ENCODE measurements at regions of chr1 and their contacts with region 1.

Region 1: DNA sequence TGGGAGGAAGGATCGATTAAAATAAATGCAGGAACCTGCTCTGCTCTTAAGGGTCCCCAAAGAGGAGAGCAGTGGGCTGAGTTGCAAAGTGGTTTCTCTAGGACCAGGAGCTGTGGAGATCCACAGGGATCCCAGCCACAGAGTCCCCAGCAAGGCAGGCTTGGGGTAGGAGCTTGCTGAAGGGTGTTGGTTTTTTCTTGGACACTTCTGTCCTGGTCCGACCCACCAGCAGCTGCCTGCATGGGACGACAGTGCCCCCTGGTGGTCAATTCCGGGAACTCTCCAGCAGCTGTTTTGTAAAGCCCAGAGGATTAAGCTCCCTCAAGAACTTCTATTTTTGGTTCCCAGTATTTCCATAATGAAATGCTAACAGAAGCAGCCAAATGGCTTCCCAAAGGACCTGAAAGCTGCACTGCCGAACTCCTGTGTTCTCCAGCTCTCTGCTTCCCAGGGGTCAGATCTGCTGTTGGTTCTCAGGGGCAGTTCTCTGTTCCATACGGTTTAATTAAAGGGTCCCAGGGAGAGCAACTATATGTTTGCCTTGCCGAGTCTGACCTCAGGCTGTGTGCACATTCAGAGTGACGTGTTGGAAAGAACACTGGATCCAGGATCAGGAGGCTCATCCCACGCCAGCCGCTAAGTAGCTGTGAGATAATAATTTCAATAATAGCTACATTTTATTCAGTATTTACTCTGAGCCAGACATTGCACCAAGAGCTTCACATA is 23.2 kb downstream of the NENF start:
- DNase-seq: no peak
- ATAC-seq: peak; percentile 91
- H3K4me3 ChIP-seq: no peak overlapping the region
- H3K27ac ChIP-seq: no peak overlapping the region
- H3K4me1 ChIP-seq: no peaks in the 10 kb centered on the region
- H3K27me3 ChIP-seq: no peaks in the 10 kb centered on the region; a peak in 1 of 4 replicates
- CTCF ChIP-seq: peak; percentile 95 to 99 (median 96)
- EP300 ChIP-seq: no peak
- POLR2A ChIP-seq: no peak
- RAD21 ChIP-seq: peak; percentile 100

Region 2: GRCh38 chr1:211698161-211699026 is 757.6 kb before region 1 on chr1:
- CTCF ChIA-PET with region 1: interaction called, 26 read pairs
- POLR2A ChIA-PET with region 1: no interaction called
- RAD21 ChIA-PET with region 1: interaction called, 34 read pairs
- SMC1A ChIA-PET with region 1: interaction called, 5 read pairs
- in situ Hi-C with region 1: no loop called
- intact Hi-C with region 1: no loop called
- DNase-seq: peak; percentile 55
- ATAC-seq: peak; percentile 78
- H3K4me3 ChIP-seq: 0 out of 2 replicates have a peak overlapping the region, but pooled peaks have one; percentile 31
- H3K27ac ChIP-seq: no peak overlapping the region
- H3K4me1 ChIP-seq: peaks cover 40% of the 10 kb centered on the region
- H3K27me3 ChIP-seq: no peaks in the 10 kb centered on the region
- CTCF ChIP-seq: peak; percentile 98 to 99 (median 99); a peak in 5 of 6 replicates
- EP300 ChIP-seq: no peak
- POLR2A ChIP-seq: no peak
- RAD21 ChIP-seq: peak; percentile 93

Region 3: DNA sequence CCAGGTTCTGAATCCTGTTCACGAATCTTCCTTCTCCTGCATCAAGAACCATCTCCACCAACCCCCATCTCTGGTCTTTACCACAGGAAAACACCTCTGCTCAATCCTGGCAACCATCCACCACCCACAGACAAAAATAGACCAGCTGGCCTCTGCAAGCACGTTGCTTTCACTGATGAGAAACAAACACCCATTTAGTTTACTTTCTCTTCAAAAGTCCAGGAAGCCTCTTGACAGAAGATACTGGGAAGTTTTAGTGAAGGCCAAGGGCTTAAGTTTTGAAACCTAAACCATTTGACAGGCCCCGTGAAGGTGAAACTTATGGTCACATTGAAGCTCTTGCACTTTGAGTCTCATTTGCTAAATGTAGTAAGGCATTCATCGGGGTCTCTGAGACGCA is 293.3 kb before region 1 on chr1:
- CTCF ChIA-PET with region 1: interaction called, 3 read pairs
- POLR2A ChIA-PET with region 1: no interaction called
- RAD21 ChIA-PET with region 1: interaction called, 10 read pairs
- SMC1A ChIA-PET with region 1: interaction called, 6 read pairs
- in situ Hi-C with region 1: no loop called
- intact Hi-C with region 1: no loop called
- DNase-seq: peak; percentile 79
- ATAC-seq: peak; percentile 59
- H3K4me3 ChIP-seq: no peak overlapping the region
- H3K27ac ChIP-seq: peak overlapping the region; percentile 45
- H3K4me1 ChIP-seq: peaks cover 47% of the 10 kb centered on the region
- H3K27me3 ChIP-seq: no peaks in the 10 kb centered on the region
- CTCF ChIP-seq: no peak
- EP300 ChIP-seq: peak in 1 of 2 experiments; percentile 70; a peak in 2 of 4 replicates
- POLR2A ChIP-seq: no peak
- RAD21 ChIP-seq: no peak

Region 4: DNA sequence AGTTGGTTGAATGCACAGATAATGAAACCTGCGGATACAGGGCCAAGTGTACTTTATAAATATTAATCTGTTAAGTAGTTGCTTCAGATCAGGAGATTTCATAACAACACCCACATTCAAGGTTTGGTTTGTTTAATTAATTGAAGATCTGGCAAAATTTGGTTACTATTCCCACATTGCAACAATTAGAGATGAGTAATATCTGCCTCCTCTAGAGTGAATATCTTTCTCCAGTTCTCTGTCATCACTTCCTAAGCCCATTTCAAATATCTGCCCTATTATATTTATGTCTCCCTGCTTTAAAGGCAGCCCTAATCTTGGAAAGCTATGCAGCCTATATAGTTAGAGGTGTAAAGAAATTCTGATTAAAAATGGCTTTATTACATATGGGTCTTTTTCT is 109.4 kb before region 1 on chr1:
- CTCF ChIA-PET with region 1: interaction called, 16 read pairs
- POLR2A ChIA-PET with region 1: no interaction called
- RAD21 ChIA-PET with region 1: interaction called, 18 read pairs
- SMC1A ChIA-PET with region 1: interaction called, 12 read pairs
- in situ Hi-C with region 1: no loop called
- intact Hi-C with region 1: no loop called
- DNase-seq: no peak
- ATAC-seq: no peak
- H3K4me3 ChIP-seq: no peak overlapping the region
- H3K27ac ChIP-seq: no peak overlapping the region
- H3K4me1 ChIP-seq: no peaks in the 10 kb centered on the region
- H3K27me3 ChIP-seq: no peaks in the 10 kb centered on the region
- CTCF ChIP-seq: no peak
- EP300 ChIP-seq: no peak
- POLR2A ChIP-seq: no peak
- RAD21 ChIP-seq: no peak

Region 5: DNA sequence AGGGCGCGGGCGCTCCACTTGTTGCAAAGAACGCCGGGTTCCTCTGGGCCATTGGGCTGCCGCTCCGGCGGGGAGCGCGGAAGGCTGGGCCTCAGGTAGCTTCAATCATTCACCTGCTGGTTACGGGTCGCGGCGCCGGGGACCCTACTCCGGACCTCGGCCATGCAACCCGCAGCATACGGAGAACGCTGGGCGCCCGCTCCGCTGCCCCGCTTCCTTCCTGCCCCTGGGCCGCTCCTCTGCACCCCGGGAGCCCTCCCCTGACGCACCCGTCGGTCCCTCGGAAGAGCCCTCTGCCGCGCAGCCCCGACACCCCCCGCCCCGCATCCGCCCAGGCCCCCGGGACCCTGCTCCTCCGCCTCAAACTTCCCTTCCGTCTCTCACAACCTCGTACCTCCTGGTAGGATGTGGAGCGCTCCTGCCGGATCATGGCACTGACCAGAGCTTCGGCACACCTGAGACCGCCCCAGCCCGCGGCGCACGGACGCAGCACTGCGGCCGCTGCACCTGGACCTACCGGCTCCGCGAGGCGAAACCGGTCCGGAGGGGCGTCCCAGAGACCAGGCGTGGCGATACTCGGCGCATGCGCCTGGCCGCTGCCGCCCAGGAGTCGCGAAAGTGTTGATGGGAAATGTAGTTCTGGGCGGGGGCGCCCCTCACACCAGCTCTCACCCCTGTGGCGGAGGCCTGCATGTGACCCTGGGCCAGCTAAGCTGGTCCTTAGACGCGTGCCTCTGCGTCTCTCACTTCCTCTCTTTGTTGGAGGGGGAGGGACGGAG is 41.4 kb before region 1 on chr1 and contains the start of gene PACC1:
- CTCF ChIA-PET with region 1: interaction called, 36 read pairs
- POLR2A ChIA-PET with region 1: interaction called, 3 read pairs
- RAD21 ChIA-PET with region 1: interaction called, 16 read pairs
- SMC1A ChIA-PET with region 1: interaction called, 9 read pairs
- in situ Hi-C with region 1: no loop called
- intact Hi-C with region 1: loop called (anchors 2 kb)
- DNase-seq: peak; percentile 94
- ATAC-seq: peak; percentile 96
- H3K4me3 ChIP-seq: peak within 1 kb of the TSS; percentile 81
- H3K27ac ChIP-seq: peak within 1 kb of the TSS; percentile 90
- H3K4me1 ChIP-seq: peaks cover 20% of the 10 kb centered on the region
- H3K27me3 ChIP-seq: no peaks in the 10 kb centered on the region
- CTCF ChIP-seq: no peak
- EP300 ChIP-seq: peak in 1 of 2 experiments; percentile 88; a peak in 3 of 4 replicates
- POLR2A ChIP-seq: peak; percentile 96
- RAD21 ChIP-seq: no peak
- polyA plus RNA-seq, gene PACC1: 16.1 to 17.2 TPM

Region 6: DNA sequence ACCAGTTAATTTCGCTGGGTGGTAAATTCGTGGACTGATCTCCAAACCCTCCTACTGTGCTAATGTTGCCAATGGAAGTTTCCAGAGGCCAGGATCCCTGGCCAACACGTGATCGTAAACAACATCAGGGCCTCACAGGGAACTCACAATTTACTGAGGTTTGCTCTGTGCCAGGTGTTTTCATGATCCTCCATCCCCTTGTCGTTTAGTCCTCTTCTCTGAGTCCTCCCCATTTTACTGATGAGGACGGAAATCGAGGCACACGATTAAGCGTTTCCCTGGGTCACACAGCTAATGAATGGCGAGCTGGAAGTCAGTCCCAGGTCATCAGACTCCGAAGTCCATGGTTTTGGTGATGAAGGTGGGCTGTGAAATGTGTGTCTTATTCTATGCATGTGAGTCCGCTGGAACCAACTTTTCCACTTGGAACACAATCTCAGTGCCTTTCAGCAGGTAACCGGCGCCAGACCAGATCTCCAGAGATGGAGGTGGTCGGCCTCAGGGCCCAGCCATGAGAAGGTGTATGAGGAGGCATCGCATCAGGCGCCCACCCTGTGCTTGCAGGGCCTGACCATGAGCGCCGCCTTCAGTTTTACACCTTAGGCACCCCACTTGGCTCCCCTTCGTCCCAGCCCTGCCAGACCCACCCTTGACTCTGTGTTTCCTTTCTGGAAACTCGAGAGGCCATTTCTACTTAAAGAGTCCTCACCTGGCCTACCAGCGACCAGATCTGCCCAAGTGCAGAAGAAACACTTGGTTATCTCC is 103.8 kb after region 1 on chr1:
- CTCF ChIA-PET with region 1: no interaction called
- POLR2A ChIA-PET with region 1: no interaction called
- RAD21 ChIA-PET with region 1: no interaction called
- SMC1A ChIA-PET with region 1: no interaction called
- in situ Hi-C with region 1: no loop called
- intact Hi-C with region 1: no loop called
- DNase-seq: no peak
- ATAC-seq: no peak
- H3K4me3 ChIP-seq: no peak overlapping the region
- H3K27ac ChIP-seq: peak overlapping the region; percentile 76; the same call in 1 of the 2 replicates
- H3K4me1 ChIP-seq: peaks cover 8% of the 10 kb centered on the region
- H3K27me3 ChIP-seq: no peaks in the 10 kb centered on the region
- CTCF ChIP-seq: no peak
- EP300 ChIP-seq: no peak
- POLR2A ChIP-seq: no peak
- RAD21 ChIP-seq: no peak

Region 7: DNA sequence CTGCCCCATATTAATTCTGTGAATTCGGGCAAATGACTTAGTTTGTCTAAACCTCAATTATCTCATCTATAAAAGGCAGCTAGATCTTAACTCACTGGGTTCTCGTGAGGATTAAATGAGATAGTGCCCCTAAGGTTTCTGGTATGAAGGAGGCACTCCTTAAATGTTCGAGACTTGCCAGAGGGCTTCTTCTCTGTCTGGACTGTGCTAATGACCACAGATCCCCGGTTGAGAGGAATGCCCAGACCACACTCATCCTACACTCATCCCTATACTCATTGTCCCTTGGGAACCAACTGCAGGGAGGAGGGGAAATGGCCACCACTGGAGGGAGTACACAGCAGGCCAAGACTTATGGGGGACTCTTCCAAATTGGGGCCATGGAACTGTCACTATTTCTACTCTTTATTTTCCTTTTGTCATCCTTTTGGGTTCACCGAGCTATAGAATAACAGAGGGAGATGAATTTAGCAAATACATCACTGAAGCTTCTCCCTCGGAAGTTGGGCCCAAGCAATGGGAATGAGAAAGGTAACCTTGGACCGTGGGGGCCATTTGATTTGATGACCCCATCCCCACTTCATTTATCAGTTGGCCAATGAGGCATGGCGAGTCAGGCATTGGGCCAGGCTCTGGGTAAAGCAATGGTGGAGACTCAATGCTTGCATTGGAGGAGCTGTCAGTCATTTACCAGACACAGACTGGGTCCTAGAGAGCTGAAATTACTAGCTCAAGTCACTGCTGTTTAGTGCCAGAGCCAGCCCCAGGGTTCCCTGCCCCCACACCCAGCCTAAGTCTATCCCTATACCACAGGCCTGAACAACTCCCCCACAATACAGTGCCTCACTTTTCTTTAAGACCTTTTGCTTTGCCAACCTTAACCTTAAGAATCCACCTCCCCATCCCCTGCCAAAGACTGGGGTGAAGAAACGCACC is 157.8 kb after region 1 on chr1:
- CTCF ChIA-PET with region 1: interaction called, 10 read pairs
- POLR2A ChIA-PET with region 1: no interaction called
- RAD21 ChIA-PET with region 1: interaction called, 3 read pairs
- SMC1A ChIA-PET with region 1: no interaction called
- in situ Hi-C with region 1: no loop called
- intact Hi-C with region 1: no loop called
- DNase-seq: no peak
- ATAC-seq: peak; percentile 8
- H3K4me3 ChIP-seq: peak overlapping the region; percentile 65; the same call in 1 of the 2 replicates
- H3K27ac ChIP-seq: peak overlapping the region; percentile 66
- H3K4me1 ChIP-seq: peaks cover 27% of the 10 kb centered on the region
- H3K27me3 ChIP-seq: no peaks in the 10 kb centered on the region
- CTCF ChIP-seq: no peak
- EP300 ChIP-seq: no peak
- POLR2A ChIP-seq: no peak
- RAD21 ChIP-seq: no peak